PC-3 (cell line): ENCODE measurements at regions of chr21 and their contacts with region 1.

Region 1: DNA sequence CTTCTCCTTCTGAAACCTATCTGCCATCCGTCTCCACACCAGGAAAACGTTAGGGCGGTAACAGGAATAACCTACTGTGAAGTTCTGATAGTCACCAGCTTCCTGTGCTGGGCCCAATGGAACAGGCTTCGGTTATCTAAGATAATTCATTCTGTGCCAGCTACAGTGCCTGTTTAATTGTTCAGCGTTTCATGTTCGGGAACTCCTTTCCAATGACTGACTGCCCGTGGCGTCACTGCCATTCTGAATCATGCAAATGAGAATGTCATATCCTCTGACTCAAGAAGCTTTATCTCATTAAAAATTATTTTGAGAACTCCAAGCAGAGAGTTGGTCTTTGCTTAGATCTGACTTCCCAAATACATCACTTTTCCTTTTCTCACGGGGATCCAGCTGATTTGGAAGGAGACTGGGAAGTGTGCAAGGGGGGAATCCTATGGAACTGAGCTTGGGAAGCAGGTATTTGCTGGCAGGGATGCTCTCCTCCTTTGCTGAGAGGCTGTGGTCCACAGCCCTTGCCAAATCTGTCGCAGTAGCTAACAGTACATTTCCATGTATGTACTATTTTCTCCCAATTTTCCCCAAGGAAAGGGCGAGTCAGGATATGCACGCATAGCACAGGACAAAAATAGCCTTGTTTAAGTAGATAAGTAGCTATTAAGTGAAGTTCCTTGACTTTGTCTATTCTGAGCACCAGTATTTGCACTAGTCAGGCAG is 358.7 kb downstream of the LTN1 start:
- DNase-seq: peak; percentile 91
- ATAC-seq: peak; percentile 31
- H3K4me3 ChIP-seq: peak overlapping the region; percentile 11; the same call in 1 of the 2 replicates
- H3K27ac ChIP-seq: peak overlapping the region; percentile 97
- H3K4me1 ChIP-seq: peaks cover 70% of the 10 kb centered on the region
- H3K27me3 ChIP-seq: no peaks in the 10 kb centered on the region
- CTCF ChIP-seq: no peak

Region 2: GRCh38 chr21:28436286-28436932 is 197.6 kb before region 1 on chr21:
- CTCF ChIA-PET with region 1: no interaction called
- POLR2A ChIA-PET with region 1: no interaction called
- intact Hi-C with region 1: loop called (anchors 10 kb)
- DNase-seq: peak; percentile 79
- ATAC-seq: peak; percentile 80
- H3K4me3 ChIP-seq: no peak overlapping the region
- H3K27ac ChIP-seq: peak overlapping the region; percentile 55
- H3K4me1 ChIP-seq: peaks cover 18% of the 10 kb centered on the region
- H3K27me3 ChIP-seq: no peaks in the 10 kb centered on the region
- CTCF ChIP-seq: no peak

Region 3: GRCh38 chr21:28550057-28550825 is 83.8 kb before region 1 on chr21:
- CTCF ChIA-PET with region 1: interaction called, 4 read pairs
- POLR2A ChIA-PET with region 1: no interaction called
- intact Hi-C with region 1: loop called (anchors 1 kb)
- DNase-seq: peak; percentile 92
- ATAC-seq: peak; percentile 79
- H3K4me3 ChIP-seq: peak overlapping the region; percentile 22; the same call in 1 of the 2 replicates
- H3K27ac ChIP-seq: peak overlapping the region; percentile 91
- H3K4me1 ChIP-seq: peaks cover 25% of the 10 kb centered on the region
- H3K27me3 ChIP-seq: no peaks in the 10 kb centered on the region
- CTCF ChIP-seq: no peak

Region 4: GRCh38 chr21:28587748-28588147 is 46.2 kb before region 1 on chr21:
- CTCF ChIA-PET with region 1: no interaction called
- POLR2A ChIA-PET with region 1: no interaction called
- intact Hi-C with region 1: loop called (anchors 2 kb)
- DNase-seq: peak; percentile 88
- ATAC-seq: peak; percentile 98
- H3K4me3 ChIP-seq: peak overlapping the region; percentile 19; the same call in 1 of the 2 replicates
- H3K27ac ChIP-seq: peak overlapping the region; percentile 86
- H3K4me1 ChIP-seq: peaks cover 21% of the 10 kb centered on the region
- H3K27me3 ChIP-seq: no peaks in the 10 kb centered on the region
- CTCF ChIP-seq: no peak

Region 5: DNA sequence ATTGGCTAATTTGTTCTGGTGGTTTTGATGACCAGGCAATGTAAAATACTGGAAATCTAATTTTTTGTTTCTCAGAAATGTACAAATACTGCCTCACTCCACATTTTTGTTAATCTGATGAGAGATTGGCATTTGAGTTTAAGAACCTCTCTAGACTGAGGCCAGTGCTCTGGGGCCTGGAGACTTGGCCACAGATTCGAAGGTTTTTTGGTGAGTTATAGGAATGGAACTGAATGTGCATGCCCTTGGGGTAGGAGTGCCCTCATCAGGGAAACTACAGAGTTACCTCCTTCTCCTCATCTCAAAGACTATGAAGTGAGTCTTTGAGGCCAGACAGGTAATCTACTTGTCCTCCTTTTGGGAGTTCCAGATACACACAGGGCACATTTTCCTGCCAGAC is 10.8 kb after region 1 on chr21:
- CTCF ChIA-PET with region 1: no interaction called
- POLR2A ChIA-PET with region 1: no interaction called
- intact Hi-C with region 1: no loop called
- DNase-seq: peak; percentile 50
- ATAC-seq: peak; percentile 31; the same call in 1 of the 2 replicates
- H3K4me3 ChIP-seq: no peak overlapping the region
- H3K27ac ChIP-seq: no peak overlapping the region
- H3K4me1 ChIP-seq: no peaks in the 10 kb centered on the region; the same call in 1 of the 2 replicates
- H3K27me3 ChIP-seq: no peaks in the 10 kb centered on the region
- CTCF ChIP-seq: 0 out of 2 replicates have a peak, but pooled peaks have one; percentile 11

Region 6: GRCh38 chr21:28671549-28672195 is 37.7 kb after region 1 on chr21:
- CTCF ChIA-PET with region 1: no interaction called
- POLR2A ChIA-PET with region 1: interaction called, 4 read pairs
- intact Hi-C with region 1: loop called (anchors 1 kb)
- DNase-seq: peak; percentile 84
- ATAC-seq: peak; percentile 87
- H3K4me3 ChIP-seq: no peak overlapping the region
- H3K27ac ChIP-seq: peak overlapping the region; percentile 92
- H3K4me1 ChIP-seq: peaks cover 29% of the 10 kb centered on the region
- H3K27me3 ChIP-seq: no peaks in the 10 kb centered on the region
- CTCF ChIP-seq: no peak

Region 7: GRCh38 chr21:28943631-28944030 is 309.6 kb after region 1 on chr21:
- CTCF ChIA-PET with region 1: no interaction called
- POLR2A ChIA-PET with region 1: no interaction called
- intact Hi-C with region 1: loop called (anchors 10 kb)
- DNase-seq: no peak
- ATAC-seq: no peak
- H3K4me3 ChIP-seq: no peak overlapping the region
- H3K27ac ChIP-seq: no peak overlapping the region
- H3K4me1 ChIP-seq: no peaks in the 10 kb centered on the region
- H3K27me3 ChIP-seq: no peaks in the 10 kb centered on the region
- CTCF ChIP-seq: no peak

Region 8: DNA sequence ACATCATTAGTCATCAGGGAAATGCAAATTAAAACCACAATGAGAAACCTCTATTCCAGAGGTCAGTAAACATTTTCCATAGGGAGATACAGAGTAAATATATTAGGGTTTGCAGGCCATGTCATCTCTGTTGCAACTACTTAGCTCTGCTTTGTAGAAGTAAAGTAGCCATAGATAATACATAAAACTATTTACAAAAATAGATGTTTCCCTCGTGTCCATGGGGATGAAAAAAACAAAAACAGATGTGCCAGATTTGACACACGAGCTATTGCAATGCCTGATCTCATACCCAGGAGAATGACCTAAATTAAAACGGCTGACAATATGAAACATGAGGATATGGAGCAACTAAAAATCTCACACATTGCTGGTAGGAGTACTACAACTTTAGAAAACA is 341.4 kb after region 1 on chr21:
- CTCF ChIA-PET with region 1: no interaction called
- POLR2A ChIA-PET with region 1: no interaction called
- intact Hi-C with region 1: no loop called
- DNase-seq: no peak
- ATAC-seq: peak; percentile 42
- H3K4me3 ChIP-seq: no peak overlapping the region
- H3K27ac ChIP-seq: no peak overlapping the region
- H3K4me1 ChIP-seq: no peaks in the 10 kb centered on the region
- H3K27me3 ChIP-seq: no peaks in the 10 kb centered on the region
- CTCF ChIP-seq: no peak